Natural killer cell (primary cell): ENCODE measurements at regions of chr13 and their contacts with region 1.

Region 1: DNA sequence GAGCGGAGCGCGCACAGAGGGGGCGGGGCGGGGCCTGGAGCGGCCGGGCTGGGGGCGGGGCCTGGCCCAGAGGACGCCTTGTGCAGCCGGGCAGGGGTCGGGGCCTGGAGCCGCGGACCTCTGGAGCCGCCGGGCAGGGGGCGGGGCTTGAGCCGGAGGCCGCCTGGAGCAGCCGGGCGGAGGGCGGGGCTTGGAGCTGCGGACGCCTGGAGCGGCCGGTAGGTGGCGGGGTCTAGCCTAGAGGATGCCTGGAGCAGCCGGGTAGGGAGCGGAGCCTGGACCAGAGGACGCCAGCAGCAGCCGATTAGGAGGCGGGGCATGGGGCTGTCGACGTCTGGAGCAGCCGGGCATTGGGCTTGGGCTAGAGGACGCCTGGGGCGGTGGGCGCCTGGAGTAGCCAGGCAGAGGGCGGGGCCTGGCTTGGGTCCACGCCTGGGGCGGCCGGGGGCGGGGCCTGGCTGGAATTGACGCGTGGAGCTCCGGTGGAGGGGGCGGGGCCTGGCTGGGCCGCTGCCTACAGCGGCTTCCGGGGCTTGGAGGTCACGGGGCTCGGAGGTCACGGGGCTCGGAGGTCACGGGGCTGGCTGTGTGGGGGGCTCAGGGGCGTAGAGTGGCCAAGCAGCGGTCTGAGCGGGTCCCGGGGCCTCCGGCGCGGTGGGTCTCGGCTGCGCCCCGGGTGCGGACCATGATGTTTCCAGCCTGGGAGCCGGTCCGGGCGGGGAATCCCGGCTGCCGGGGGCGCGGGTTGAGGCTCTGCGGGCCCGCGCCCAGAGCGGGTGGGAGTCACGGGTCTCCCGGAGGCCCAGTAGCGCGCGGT is at the start of gene ANKRD10:
- DNase-seq: peak; percentile 93
- ATAC-seq: peak; percentile 76 to 89 (median 78)
- H3K4me3 ChIP-seq: peak within 1 kb of the TSS; percentile 97
- H3K4me3 Mint-ChIP-seq: peak within 1 kb of the TSS; percentile 95
- H3K27ac ChIP-seq: peak within 1 kb of the TSS; percentile 95
- H3K27ac Mint-ChIP-seq: peak within 1 kb of the TSS; percentile 93
- H3K4me1 ChIP-seq: peaks cover 24% of the 10 kb centered on the region
- H3K4me1 Mint-ChIP-seq: peaks cover 31 to 43% of the 10 kb centered on the region in 2 donors
- H3K27me3 ChIP-seq: no peaks in the 10 kb centered on the region
- H3K27me3 Mint-ChIP-seq: no peaks in the 10 kb centered on the region
- CTCF ChIP-seq: peak; percentile 85
- total RNA-seq, gene ANKRD10: 173 to 221 (median 185) TPM

Region 2: GRCh38 chr13:110726726-110727125 is 188.5 kb before region 1 on chr13:
- intact Hi-C with region 1: loop called (anchors 5 kb)
- DNase-seq: peak; percentile 65 to 74
- ATAC-seq: peak; percentile 86 to 97 (median 89)
- H3K4me3 ChIP-seq: no peak overlapping the region
- H3K4me3 Mint-ChIP-seq: peak overlapping the region; percentile 91
- H3K27ac ChIP-seq: no peak overlapping the region
- H3K27ac Mint-ChIP-seq: peak overlapping the region; percentile 75 to 82
- H3K4me1 ChIP-seq: peaks cover 28% of the 10 kb centered on the region
- H3K4me1 Mint-ChIP-seq: peaks cover 30 to 36% of the 10 kb centered on the region in 2 donors
- H3K27me3 ChIP-seq: no peaks in the 10 kb centered on the region
- H3K27me3 Mint-ChIP-seq: no peaks in the 10 kb centered on the region
- CTCF ChIP-seq: no peak

Region 3: DNA sequence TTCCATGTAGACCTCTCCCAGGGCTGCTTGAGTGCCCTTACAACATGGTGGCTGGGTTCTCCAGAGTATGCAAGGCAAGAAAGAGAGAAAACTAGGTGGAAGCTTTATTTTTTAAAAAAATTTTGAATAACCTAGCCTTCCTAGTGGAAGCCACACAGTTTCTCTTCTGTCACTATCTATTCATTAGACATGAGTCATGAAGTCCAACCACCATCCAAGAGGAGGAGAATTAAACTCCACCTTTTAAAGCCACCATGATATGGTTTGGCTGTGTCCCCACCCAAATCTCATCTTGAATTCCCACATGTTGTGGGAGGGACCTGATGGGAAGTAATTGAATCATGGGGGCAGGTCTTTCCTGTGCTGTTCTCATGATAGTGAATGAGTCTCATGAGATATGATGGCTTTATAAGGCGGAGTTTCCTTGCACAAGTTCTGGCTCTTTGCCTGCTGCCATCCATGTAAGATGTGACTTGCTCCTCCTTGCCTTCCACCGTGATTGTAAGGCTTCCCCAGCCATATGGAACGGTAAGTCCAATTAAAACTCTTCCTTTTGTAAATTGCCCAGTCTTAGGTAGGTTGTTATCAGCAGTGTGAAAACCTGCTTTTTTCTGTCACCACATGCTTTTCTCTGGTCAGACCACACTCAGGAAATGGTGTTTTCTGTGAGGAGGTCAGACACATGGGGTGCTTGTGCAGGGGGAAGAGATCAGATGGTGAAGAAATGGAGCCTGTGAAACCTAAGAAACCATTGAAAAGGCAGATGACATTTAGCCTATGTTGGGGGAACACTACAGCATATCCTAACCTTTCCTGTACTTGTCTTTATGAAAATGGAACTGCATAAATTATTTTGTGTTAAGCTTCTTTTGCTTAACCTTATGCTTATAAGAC is 58.1 kb before region 1 on chr13:
- intact Hi-C with region 1: loop called (anchors 5 kb)
- DNase-seq: peak in 1 of 2 donors; percentile 50
- ATAC-seq: peak; percentile 66 to 98 (median 86)
- H3K4me3 ChIP-seq: no peak overlapping the region
- H3K4me3 Mint-ChIP-seq: peak overlapping the region; percentile 73
- H3K27ac ChIP-seq: peak overlapping the region; percentile 3
- H3K27ac Mint-ChIP-seq: peak overlapping the region; percentile 70 to 77
- H3K4me1 ChIP-seq: peaks cover 17% of the 10 kb centered on the region
- H3K4me1 Mint-ChIP-seq: peaks cover 27 to 29% of the 10 kb centered on the region in 2 donors
- H3K27me3 ChIP-seq: no peaks in the 10 kb centered on the region
- H3K27me3 Mint-ChIP-seq: peaks cover 11 to 15% of the 10 kb centered on the region in 2 donors
- CTCF ChIP-seq: no peak

Region 4: DNA sequence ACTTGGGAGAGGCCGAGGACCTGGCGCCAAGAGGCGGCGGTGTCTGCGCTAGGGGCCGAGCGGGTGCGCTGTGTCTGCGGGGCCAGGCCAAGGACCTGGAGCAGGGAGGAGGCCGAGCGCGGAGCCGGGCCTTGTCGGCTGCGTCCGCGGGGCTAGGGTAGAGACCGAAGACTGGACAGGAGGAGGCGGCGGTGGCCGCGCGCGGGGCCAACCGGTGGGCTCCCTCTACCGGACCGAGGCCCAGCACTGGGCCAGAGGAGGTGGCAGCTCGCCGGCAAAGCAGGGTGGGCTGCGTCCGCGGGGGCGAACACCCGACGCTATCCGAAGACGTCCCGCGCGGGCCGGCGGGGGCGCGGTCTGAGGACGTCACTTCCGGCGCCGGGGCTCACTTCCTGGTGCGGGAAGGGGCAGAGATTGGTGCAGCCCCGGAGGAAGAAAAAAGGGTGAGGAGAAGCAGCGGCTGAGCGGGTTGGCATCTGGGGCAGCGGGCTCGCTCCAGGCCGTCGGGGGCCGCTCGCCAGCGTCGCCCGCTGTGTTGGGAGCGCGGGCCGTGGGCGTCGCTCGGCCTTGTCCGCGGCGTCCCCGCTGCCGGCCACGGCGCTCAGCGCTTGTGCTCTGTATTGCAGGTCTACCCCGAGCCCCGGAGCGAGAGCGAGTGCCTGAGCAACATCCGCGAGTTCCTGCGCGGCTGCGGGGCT is 238.2 kb after region 1 on chr13:
- intact Hi-C with region 1: loop called (anchors 2 kb)
- DNase-seq: peak; percentile 93
- ATAC-seq: peak; percentile 82 to 93 (median 88)
- H3K4me3 ChIP-seq: peak overlapping the region; percentile 43
- H3K4me3 Mint-ChIP-seq: peak overlapping the region; percentile 93
- H3K27ac ChIP-seq: peak overlapping the region; percentile 71
- H3K27ac Mint-ChIP-seq: peak overlapping the region; percentile 90 to 92
- H3K4me1 ChIP-seq: peaks cover 15% of the 10 kb centered on the region
- H3K4me1 Mint-ChIP-seq: peaks cover 21 to 25% of the 10 kb centered on the region in 2 donors
- H3K27me3 ChIP-seq: no peaks in the 10 kb centered on the region
- H3K27me3 Mint-ChIP-seq: peaks cover 3 to 4% of the 10 kb centered on the region in 2 donors
- CTCF ChIP-seq: no peak